Mammary epithelial cell (primary cell): ENCODE measurements at regions of chr16 and their contacts with region 1.

Region 1: DNA sequence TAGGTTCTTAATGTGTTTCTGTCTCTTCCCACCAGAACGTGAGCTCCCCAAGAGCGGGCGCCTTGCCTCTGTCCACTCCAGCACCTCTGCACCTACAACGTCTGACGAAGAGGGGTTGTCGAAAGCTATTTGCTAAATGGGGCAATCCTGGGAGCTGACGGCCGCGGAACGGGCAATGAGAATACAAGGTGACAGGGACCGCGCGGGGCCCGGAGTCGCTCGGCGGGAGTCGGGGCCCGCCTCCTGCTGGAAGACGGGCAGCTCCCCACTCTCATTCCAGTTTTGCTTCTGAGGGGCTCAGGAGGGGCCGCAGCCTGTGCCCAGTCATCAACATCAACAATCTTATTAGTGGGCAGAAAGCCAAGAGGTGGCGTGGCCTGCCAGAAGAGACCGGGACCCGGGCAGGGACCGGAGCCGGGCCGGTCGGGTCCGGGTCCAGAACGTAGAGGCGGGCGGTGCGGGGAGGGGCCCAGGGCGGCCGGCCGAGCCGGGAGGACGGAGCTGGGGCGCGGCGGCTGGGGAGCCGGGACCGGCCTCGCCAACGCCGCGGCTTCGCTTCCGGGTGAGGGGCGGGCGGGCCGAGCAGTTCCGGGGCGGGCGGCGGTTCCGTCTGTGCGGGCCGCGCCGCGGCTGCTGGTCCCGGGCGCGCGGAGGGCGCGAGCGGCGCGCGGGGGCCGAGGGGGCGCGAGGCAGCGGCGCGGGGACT is at the start of gene MOSMO:
- DNase-seq: peak; percentile 68
- H3K4me3 ChIP-seq: peak within 1 kb of the TSS; percentile 96 to 99 (median 97)
- H3K27ac ChIP-seq: peak within 1 kb of the TSS; percentile 83
- H3K4me1 ChIP-seq: peaks cover 30% of the 10 kb centered on the region
- H3K27me3 ChIP-seq: no peaks in the 10 kb centered on the region
- CTCF ChIP-seq: peak in 1 of 2 donors; percentile 14
- total RNA-seq, gene MOSMO: 19.0 to 34.8 TPM

Region 2: DNA sequence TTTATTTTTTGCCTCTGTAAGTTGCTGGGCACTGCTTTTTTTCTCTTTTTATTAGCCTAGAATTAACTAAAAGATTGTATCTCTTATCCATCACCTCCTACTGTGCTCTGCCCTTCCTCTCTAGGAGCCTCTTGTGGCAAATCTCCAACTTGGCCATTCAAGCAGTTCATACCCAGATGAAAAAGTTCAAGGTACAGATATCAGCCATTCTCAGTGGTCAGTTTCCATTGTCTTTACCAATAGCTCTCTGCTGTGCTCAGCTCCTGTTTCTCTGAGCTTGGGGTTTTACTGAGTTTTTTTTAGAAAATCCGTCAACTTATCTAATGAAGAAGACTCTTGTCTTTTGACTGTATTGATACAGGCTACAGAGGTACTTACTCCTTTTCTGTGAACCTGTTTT is 15.8 kb after region 1 on chr16:
- CTCF ChIA-PET with region 1: interaction called, 9 read pairs
- dilution Hi-C with region 1: no loop called
- in situ Hi-C with region 1: no loop called
- intact Hi-C with region 1: loop called (anchors 1 kb)
- DNase-seq: no peak
- H3K4me3 ChIP-seq: no peak overlapping the region
- H3K27ac ChIP-seq: peak overlapping the region; percentile 1
- H3K4me1 ChIP-seq: peaks cover 49% of the 10 kb centered on the region
- H3K27me3 ChIP-seq: no peaks in the 10 kb centered on the region
- CTCF ChIP-seq: no peak

Region 3: DNA sequence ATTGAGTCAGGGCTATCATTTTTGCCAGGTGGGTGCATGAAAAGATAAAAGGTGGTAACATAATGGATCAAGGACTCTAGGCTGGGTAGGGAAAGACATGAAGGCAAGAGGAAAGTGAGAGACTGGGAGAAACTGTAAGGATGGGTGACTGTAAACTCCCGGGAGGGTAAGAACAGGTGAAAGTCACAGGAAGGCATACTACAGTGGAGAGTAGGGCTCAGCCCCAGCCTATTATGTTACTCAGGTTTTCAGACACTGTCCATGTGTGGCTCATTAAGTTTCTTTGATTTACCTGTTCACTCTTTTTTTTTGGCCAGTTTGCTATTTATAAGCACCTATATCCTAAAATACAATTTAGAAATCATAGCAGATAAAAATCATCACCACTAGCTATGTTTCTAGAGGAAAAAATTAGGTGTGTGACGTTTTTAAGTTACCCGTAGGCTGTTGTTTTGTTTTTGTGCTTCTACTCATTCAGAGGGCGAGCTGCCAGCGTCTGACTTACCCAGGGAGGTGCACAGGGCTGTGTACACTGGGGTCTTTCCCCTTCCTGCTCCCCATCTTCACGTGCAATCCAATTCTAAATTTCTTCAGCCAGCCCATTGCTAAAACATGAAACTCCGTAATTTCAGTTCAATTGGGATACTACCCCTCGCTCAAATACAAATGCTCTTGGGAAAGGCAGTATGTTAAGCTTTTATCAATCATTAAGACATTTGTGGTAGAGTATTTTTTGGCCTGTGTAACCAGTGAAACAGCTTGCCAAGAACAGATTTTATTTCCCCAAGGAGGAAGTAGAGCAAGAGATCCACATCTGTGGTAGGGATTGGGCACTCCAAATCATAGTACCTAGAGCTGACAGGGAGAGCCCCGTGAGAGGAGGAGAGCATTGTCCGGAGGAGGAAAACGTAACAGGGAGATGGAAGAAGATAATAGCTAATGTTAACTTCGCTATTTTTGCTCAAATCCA is 63.0 kb after region 1 on chr16:
- CTCF ChIA-PET with region 1: interaction called, 4 read pairs
- dilution Hi-C with region 1: loop called (anchors 10 kb)
- in situ Hi-C with region 1: loop called in 1 of 2 experiments (anchors 5 kb)
- intact Hi-C with region 1: no loop called
- DNase-seq: peak; percentile 58
- H3K4me3 ChIP-seq: peak overlapping the region; percentile 14 to 35 (median 17)
- H3K27ac ChIP-seq: peak overlapping the region; percentile 95
- H3K4me1 ChIP-seq: peaks cover 69% of the 10 kb centered on the region
- H3K27me3 ChIP-seq: no peaks in the 10 kb centered on the region
- CTCF ChIP-seq: no peak

Region 4: GRCh38 chr16:22089910-22090309 is 82.2 kb after region 1 on chr16:
- CTCF ChIA-PET with region 1: no interaction called
- dilution Hi-C with region 1: no loop called
- in situ Hi-C with region 1: no loop called
- intact Hi-C with region 1: no loop called
- DNase-seq: no peak
- H3K4me3 ChIP-seq: no peak overlapping the region
- H3K27ac ChIP-seq: no peak overlapping the region
- H3K4me1 ChIP-seq: no peaks in the 10 kb centered on the region
- H3K27me3 ChIP-seq: no peaks in the 10 kb centered on the region
- CTCF ChIP-seq: no peak